Heart left ventricle (tissue), 16 donors: ENCODE measurements at regions of chr3 and their contacts with region 1.

Region 1: DNA sequence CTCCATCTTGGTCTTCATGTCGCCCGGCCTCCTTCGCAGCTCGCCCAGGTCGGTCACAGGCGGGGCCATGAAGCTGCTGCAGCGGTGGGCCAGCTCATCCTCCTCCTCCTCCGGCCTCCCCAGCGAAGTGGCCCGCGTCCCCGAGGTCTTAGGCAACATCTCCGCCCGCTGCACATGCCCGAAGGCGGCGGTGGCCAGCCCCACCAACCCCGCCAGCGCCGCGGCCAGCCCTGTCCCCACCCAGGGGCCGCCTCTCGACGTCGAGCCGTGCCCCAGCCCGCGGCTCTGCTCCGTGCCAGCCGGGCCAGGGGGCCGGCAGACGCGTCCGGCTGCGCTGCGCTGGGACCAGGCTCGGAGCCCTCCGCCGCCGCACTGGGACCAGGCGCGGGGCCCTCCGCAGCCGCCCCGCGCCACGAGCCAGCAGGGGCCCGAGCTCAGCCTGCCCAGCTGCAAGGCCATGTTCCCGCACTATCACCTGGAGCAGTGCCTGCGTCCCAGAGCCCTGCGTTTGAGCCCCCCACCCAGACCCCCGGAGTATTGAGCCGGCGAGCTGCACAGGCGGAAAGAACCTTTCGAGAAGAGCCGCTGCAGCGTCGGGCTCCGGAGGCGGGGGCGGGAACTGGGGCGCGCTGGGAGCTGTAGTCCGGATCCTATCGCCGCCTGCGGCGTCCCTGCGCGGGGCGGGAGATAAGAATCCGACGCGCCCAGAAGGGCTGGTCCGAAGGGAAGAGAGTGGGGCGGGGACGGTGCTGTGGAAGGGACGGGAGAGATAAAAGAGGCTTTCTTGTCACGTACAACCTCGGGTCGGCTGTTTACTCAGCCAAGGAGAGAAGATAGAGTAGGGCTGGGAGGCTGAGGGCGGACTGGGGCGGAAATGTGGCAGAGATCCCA is at the start of gene CPOX:
- DNase-seq: peak; percentile 88 to 94 (median 91)
- ATAC-seq: peak; percentile 96 to 99 (median 98)
- H3K4me3 ChIP-seq: peak within 1 kb of the TSS; percentile 67 to 93 (median 80)
- H3K27ac ChIP-seq: peak within 1 kb of the TSS; percentile 51 to 90 (median 86)
- H3K4me1 ChIP-seq: peaks cover 4 to 43% (median 14%) of the 10 kb centered on the region in 12 donors
- H3K27me3 ChIP-seq: no peaks in the 10 kb centered on the region
- CTCF ChIP-seq: no peak
- POLR2A ChIP-seq: peak in 1 of 2 donors; percentile 51
- total RNA-seq, gene CPOX: 7.7 to 13.6 (median 12.4) TPM

Region 2: GRCh38 chr3:98522244-98523090 is 70.8 kb before region 1 on chr3 and contains the start of gene CLDND1:
- intact Hi-C with region 1: loop called in 9 of 10 experiments (anchors 2 to 10 kb)
- DNase-seq: peak; percentile 98 to 99 (median 98)
- ATAC-seq: peak; percentile 99 to 100 (median 100)
- H3K4me3 ChIP-seq: peak within 1 kb of the TSS; percentile 60 to 94 (median 74)
- H3K27ac ChIP-seq: peak within 1 kb of the TSS; percentile 92 to 98 (median 95)
- H3K4me1 ChIP-seq: peaks cover 0 to 30% (median 20%) of the 10 kb centered on the region in 12 donors
- H3K27me3 ChIP-seq: no peaks in the 10 kb centered on the region
- CTCF ChIP-seq: no peak
- POLR2A ChIP-seq: peak in 1 of 2 donors; percentile 91
- total RNA-seq, gene CLDND1: 64.2 to 155 (median 77.0) TPM

Region 3: DNA sequence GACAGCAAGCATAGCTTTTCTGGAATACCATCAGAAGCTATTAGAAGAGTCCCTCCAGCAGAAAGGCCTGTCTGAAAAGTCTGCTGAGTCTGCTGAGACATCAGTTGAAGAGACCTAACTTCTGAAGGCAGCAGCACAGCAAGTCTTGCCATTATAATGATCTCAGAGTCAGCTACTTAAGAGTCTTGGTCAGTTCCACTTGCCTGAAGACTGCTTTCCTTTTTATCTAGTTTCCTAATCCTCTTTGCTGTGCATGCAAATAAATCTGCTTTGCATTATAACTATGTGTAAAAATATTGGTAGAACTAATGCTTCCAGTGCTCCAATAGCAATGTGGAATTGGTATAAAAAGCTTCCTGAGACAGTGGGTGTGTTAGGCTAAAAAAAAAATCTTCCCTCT is 35.0 kb after region 1 on chr3:
- intact Hi-C with region 1: no loop called
- DNase-seq: no peak
- ATAC-seq: no peak
- H3K4me3 ChIP-seq: no peak overlapping the region
- H3K27ac ChIP-seq: no peak overlapping the region
- H3K4me1 ChIP-seq: no peaks in the 10 kb centered on the region
- H3K27me3 ChIP-seq: no peaks in the 10 kb centered on the region
- CTCF ChIP-seq: no peak
- POLR2A ChIP-seq: no peak

Region 4: DNA sequence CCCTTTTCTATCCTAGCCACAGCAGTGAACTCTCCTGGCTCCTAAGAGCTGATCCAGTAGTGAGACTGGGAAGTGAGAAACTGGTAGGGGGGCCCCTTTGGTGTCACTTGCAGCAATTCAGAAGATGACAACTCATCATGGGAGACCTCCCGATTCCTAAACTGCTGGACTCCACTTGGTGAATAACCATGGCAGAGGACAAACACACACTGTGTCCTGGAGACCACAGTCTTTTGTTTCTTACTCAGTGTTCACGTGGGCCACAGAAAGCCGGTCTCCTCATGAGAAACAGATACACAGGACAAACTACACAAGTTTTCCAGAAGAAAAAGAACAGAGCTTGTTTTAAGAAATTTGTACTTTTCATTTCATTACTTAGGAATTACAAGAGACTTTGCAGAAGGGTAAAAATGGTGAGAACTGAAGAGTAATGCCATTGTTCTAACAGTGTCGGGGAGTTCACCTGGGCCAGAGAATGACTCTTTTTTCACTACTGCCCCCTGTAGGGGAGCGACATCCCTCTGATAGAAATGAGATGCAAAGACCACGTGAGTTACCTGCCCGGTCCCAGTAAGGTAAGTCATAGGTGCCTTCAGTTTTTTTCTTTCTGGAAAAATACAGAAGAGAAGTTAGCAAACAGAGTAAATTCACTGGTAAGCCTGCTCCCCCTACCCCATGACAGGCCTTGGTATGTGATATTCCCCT is 207.9 kb after region 1 on chr3:
- intact Hi-C with region 1: no loop called
- DNase-seq: no peak
- ATAC-seq: peak in 2 of 4 donors; percentile 33 to 45
- H3K4me3 ChIP-seq: no peak overlapping the region
- H3K27ac ChIP-seq: no peak overlapping the region
- H3K4me1 ChIP-seq: no peaks in the 10 kb centered on the region
- H3K27me3 ChIP-seq: no peaks in the 10 kb centered on the region
- CTCF ChIP-seq: peak in 7 of 12 donors; percentile 6 to 24 (median 13)
- POLR2A ChIP-seq: no peak

Region 5: DNA sequence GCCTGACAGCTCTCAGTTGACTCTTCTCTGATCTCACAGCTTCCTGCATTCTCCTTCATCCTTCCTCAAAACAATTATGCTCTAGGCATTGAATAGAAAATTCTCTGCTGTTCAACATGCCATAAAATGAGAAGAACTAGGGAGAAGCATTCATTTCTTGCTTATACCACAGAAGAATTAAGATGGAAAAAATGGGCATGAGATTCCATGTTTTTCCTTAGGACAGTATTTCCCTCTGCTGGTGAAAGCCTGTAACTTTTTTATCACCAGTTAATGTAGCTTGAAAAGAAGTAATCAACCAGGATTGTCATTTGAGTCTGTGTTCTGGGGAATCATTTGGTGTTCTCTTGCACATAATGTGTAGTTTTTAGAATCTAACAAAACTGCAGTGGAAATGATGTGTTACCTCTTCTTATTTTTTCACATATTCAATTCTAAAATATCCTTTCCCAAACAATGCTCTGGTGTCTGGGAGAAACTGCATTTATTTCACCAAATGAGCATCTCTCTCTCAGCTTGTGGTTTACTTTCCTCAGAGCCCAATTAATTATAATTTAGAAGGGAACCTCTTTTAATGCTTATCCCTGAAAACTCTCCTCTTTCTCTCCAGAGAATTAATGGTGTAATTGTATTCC is 401.0 kb after region 1 on chr3:
- intact Hi-C with region 1: loop called in 4 of 10 experiments (anchors 5 to 10 kb)
- DNase-seq: no peak
- ATAC-seq: peak in 2 of 4 donors; percentile 29 to 48
- H3K4me3 ChIP-seq: no peak overlapping the region
- H3K27ac ChIP-seq: no peak overlapping the region
- H3K4me1 ChIP-seq: no peaks in the 10 kb centered on the region
- H3K27me3 ChIP-seq: no peaks in the 10 kb centered on the region
- CTCF ChIP-seq: peak; percentile 45 to 81 (median 72)
- POLR2A ChIP-seq: no peak

Region 6: DNA sequence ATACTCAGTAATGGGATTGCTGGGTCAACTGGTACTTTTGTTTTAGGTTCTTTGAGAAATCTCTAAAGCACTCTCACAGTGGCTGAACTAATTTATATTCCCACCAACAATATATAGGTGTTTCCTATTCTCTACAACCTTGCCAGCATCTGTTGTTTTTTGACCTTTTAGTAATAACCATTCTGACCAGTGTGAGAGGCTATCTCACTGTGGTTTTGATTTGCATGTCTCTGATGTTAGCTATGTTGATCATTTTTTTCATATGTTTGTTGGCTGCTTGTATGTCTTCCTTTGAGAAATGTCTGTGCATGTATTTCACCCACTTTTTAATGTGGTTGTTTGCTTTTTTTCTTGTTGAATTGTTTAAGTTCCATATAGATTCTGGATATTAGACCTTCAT is 406.4 kb after region 1 on chr3:
- intact Hi-C with region 1: loop called in 4 of 10 experiments (anchors 5 to 10 kb)
- DNase-seq: no peak
- ATAC-seq: no peak
- H3K4me3 ChIP-seq: no peak overlapping the region
- H3K27ac ChIP-seq: no peak overlapping the region
- H3K4me1 ChIP-seq: no peaks in the 10 kb centered on the region
- H3K27me3 ChIP-seq: no peaks in the 10 kb centered on the region
- CTCF ChIP-seq: no peak
- POLR2A ChIP-seq: no peak